ENCODE measurements at regions of chr13 and their contacts with region 1.

Region 1: DNA sequence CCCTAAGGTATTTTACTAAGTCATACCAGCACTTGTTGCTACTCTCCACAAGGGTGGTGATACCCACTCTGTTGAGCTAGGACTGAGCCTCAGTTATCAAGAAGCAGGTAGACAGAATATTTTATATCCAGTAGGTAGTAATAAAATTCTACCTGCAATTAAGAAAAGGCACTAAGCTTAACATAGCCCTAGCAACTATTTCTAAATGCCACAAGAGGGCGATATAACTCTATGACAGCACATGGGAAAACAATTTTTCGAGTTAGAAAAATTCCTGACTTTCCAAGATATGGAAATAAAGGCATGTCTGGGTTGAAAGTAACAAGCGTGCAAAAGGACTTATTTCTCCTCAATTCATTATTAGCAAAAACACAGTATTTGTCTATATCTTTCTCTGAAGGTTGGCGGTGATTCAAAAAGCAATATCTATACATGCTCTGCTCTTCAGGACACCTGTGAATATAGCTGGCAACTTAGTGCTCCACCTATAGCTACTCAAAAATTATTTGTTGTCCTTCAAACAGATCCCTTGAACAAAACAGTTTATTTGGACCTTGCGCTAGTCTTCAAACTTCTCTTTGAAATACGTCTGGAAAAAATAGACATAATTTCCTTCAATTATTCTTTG is 14.7 kb downstream of the CCDC169 start:
- DNase-seq: no peak
- H3K4me3 Mint-ChIP-seq: no peak overlapping the region
- H3K27ac Mint-ChIP-seq: no peak overlapping the region
- H3K4me1 Mint-ChIP-seq: no peaks in the 10 kb centered on the region
- H3K27me3 Mint-ChIP-seq: peaks cover 17% of the 10 kb centered on the region

Region 2: DNA sequence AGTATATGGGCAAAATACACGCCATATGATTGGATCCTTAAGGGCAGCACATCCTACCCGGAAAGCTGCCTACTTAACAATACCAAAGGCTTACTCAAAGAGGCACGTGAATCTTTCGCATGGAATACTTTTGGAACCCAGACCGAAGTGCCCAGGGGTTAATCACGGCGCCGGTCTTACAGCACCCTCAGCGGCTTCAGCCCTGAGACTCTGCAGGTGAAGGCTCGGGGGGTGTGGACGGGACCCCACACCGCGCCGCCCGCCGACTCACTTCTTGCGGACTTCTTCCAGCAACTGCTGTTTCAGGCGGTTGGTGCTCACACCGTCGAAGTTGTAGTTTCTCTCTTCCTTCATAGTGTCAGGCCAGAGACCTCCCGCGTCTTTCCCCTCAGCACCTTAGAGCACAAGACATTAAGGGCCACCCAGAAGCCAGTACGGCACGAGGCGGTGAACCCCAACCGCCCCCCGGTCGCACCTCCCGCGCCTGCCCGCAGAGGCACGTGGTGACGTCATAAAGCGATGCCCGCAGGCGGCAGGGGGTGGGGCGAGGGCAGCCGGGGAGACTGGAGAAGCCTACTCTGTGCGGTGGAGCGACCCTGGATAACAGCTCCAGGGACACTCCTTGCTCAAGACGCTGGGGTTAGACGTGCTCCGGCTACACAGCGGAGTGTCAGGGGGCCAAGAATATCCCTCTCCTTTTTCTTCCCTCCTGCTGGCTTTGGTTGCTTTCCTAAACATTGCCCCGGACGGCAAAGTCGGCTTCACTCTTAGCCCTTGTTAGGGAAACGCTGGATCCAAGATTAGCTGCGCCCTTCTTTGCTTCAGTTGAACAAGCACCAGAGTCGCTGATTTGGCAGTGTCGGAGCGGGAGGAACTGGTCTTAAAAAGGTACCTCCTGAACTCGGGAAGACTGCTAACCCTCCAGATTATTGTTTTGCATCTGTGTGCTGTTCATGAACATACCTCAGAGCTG is 14.7 kb after region 1 on chr13 and contains the start of gene CCDC169:
- CTCF ChIA-PET with region 1: interaction called, 18 read pairs
- intact Hi-C with region 1: no loop called
- DNase-seq: peak; percentile 78
- H3K4me3 Mint-ChIP-seq: peak within 1 kb of the TSS; percentile 86
- H3K27ac Mint-ChIP-seq: no peak within 1 kb of the TSS
- H3K4me1 Mint-ChIP-seq: peaks cover 15% of the 10 kb centered on the region
- H3K27me3 Mint-ChIP-seq: peaks cover 31% of the 10 kb centered on the region
- total RNA-seq, gene CCDC169: 0.50 to 1.0 TPM

Region 3: DNA sequence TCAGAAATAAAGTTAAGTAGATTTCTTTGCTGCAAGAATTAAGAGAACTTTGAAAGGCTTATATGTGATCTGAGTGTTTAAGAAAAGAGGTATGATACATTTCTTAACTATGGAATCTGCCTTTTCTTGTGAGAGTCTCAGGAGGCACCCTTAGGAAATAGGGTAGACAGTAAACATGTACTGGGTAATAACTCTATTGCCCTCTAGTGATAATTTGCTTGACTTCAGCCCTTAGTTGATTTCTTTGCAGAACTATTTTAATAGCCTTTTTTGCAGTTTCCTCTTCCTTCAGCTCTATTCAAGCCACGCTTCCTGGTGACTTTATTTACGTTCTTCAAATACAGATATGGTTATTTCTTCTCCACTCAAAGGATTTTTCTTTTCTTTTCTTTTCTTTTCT is 112.3 kb after region 1 on chr13:
- CTCF ChIA-PET with region 1: interaction called, 14 read pairs
- intact Hi-C with region 1: loop called (anchors 1 kb)
- DNase-seq: no peak
- H3K4me3 Mint-ChIP-seq: no peak overlapping the region
- H3K27ac Mint-ChIP-seq: no peak overlapping the region
- H3K4me1 Mint-ChIP-seq: no peaks in the 10 kb centered on the region
- H3K27me3 Mint-ChIP-seq: peaks cover 14% of the 10 kb centered on the region

Region 4: GRCh38 chr13:36571444-36571843 is 288.5 kb after region 1 on chr13:
- CTCF ChIA-PET with region 1: no interaction called
- intact Hi-C with region 1: no loop called
- DNase-seq: no peak
- H3K4me3 Mint-ChIP-seq: no peak overlapping the region
- H3K27ac Mint-ChIP-seq: no peak overlapping the region
- H3K4me1 Mint-ChIP-seq: no peaks in the 10 kb centered on the region
- H3K27me3 Mint-ChIP-seq: no peaks in the 10 kb centered on the region

Region 5: DNA sequence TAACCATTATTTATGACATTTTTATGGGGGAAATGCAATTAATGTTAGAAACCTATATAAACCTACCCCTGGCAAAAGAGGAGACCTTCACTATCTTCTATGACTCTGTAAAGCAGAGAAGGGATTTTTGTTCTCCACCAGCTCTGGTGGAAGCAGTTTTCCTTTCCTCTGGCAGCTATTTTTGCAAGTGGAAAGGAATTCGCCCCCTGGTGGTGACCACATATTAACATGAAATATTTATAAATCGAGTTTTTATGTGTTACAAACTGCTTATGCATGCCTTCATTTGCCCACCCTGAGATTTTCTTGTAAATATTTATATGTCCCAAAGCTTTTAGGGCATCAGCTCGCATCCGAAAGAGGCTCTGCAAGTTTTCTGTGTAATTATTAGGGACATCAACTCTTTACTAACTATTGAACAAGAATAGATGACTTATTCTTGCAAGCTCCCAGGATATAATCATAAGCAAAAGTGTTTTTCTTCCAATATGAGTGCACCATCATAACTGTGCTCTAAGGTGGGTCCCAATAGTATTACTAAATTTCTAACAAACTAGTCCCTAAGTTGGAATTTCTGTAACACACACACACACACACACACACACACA is 453.3 kb after region 1 on chr13:
- CTCF ChIA-PET with region 1: interaction called, 25 read pairs
- intact Hi-C with region 1: loop called (anchors 1 kb)
- DNase-seq: peak; percentile 50
- H3K4me3 Mint-ChIP-seq: no peak overlapping the region
- H3K27ac Mint-ChIP-seq: no peak overlapping the region
- H3K4me1 Mint-ChIP-seq: no peaks in the 10 kb centered on the region
- H3K27me3 Mint-ChIP-seq: peaks cover 4% of the 10 kb centered on the region

Region 6: DNA sequence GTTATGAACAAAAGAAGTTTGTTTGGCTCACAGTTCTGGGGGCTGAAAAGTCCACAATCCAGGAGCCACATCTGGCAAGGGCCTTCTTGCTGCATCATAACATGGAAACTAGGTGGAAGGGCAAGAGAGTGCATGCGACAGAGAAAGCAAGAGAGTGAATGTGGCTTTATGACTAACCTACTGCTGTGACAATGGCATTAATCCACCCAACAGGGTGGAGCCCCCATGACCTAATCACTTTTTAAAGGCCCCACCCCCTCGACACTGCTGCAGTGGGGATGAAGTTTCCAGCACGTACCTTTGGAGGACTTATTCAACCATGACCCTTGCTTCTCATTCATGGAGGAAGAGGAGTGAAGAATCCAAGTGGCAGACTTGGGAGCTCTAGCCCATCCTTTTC is 506.1 kb after region 1 on chr13:
- CTCF ChIA-PET with region 1: no interaction called
- intact Hi-C with region 1: no loop called
- DNase-seq: no peak
- H3K4me3 Mint-ChIP-seq: no peak overlapping the region
- H3K27ac Mint-ChIP-seq: no peak overlapping the region
- H3K4me1 Mint-ChIP-seq: no peaks in the 10 kb centered on the region
- H3K27me3 Mint-ChIP-seq: peaks cover 6% of the 10 kb centered on the region